Activated CD8-positive, alpha-beta T cell treated with anti-CD3 and anti-CD28 coated beads for 36 hours (primary cell): ENCODE measurements at regions of chr14 and their contacts with region 1.

Region 1: GRCh38 chr14:90697577-90698206 is 118.5 kb downstream of the TTC7B start:
- DNase-seq: peak; percentile 83
- ATAC-seq: peak; percentile 96
- H3K4me3 Mint-ChIP-seq: no peak overlapping the region
- H3K27ac Mint-ChIP-seq: no peak overlapping the region
- H3K4me1 Mint-ChIP-seq: no peaks in the 10 kb centered on the region
- H3K27me3 Mint-ChIP-seq: no peaks in the 10 kb centered on the region
- CTCF ChIP-seq: peak; percentile 96

Region 2: GRCh38 chr14:90301668-90302090 is 396.0 kb before region 1 on chr14:
- CTCF ChIA-PET with region 1: interaction called, 15 read pairs
- POLR2A ChIA-PET with region 1: no interaction called
- intact Hi-C with region 1: no loop called
- DNase-seq: no peak
- ATAC-seq: no peak
- H3K4me3 Mint-ChIP-seq: no peak overlapping the region
- H3K27ac Mint-ChIP-seq: peak overlapping the region; percentile 5
- H3K4me1 Mint-ChIP-seq: peaks cover 8% of the 10 kb centered on the region
- H3K27me3 Mint-ChIP-seq: no peaks in the 10 kb centered on the region
- CTCF ChIP-seq: no peak

Region 3: GRCh38 chr14:90399541-90400444 is 297.9 kb before region 1 on chr14:
- CTCF ChIA-PET with region 1: interaction called, 48 read pairs
- POLR2A ChIA-PET with region 1: no interaction called
- intact Hi-C with region 1: loop called (anchors 5 kb)
- DNase-seq: peak; percentile 94
- ATAC-seq: peak; percentile 55
- H3K4me3 Mint-ChIP-seq: peak overlapping the region; percentile 94
- H3K27ac Mint-ChIP-seq: peak overlapping the region; percentile 99
- H3K4me1 Mint-ChIP-seq: peaks cover 56% of the 10 kb centered on the region
- H3K27me3 Mint-ChIP-seq: no peaks in the 10 kb centered on the region
- CTCF ChIP-seq: peak; percentile 98

Region 4: DNA sequence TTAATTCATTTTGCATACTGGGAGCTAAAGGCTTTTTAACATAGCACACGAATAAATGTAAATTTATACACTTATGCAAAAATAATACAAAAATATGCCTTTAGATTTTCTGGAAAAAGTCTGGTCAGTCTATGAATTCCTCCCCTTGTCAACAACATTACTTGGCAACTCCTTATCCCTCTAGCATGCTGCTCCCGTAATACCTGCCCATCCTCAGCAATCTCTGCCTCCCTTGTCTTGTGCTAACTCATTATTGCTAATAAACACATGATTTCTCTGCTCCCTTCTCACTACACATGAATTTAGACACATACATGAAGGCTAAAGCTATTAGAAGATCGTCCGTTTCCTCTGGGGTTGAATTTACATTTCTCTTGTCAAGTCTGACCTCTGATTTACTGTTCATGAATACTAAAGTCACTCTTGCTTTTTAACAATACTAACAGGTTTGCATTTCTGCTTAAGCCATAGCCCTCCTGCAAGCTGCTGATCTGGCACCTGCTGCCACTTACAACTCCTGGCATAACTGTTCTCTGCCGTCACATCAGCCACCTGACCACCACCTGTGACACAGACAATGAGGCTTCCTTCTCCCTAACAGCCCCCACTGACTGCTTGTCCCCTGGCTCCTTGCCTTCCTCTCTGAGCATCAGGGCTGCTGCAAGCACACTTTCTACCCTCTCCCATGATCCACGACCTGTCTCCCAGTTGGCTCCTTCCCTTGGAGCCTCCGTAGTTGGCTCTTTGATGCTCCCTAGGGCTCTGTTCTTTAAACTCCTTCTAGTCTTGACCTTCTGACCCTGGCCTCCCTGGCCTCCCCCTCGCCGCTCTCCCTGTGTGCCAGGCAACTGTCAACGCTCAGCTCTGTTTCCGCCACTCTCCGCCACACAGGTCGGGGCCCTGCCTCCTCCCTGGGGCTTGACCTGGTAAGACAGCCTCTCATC is 123.2 kb before region 1 on chr14:
- CTCF ChIA-PET with region 1: interaction called, 15 read pairs
- POLR2A ChIA-PET with region 1: no interaction called
- intact Hi-C with region 1: no loop called
- DNase-seq: no peak
- ATAC-seq: no peak
- H3K4me3 Mint-ChIP-seq: no peak overlapping the region
- H3K27ac Mint-ChIP-seq: no peak overlapping the region
- H3K4me1 Mint-ChIP-seq: no peaks in the 10 kb centered on the region
- H3K27me3 Mint-ChIP-seq: no peaks in the 10 kb centered on the region
- CTCF ChIP-seq: no peak

Region 5: DNA sequence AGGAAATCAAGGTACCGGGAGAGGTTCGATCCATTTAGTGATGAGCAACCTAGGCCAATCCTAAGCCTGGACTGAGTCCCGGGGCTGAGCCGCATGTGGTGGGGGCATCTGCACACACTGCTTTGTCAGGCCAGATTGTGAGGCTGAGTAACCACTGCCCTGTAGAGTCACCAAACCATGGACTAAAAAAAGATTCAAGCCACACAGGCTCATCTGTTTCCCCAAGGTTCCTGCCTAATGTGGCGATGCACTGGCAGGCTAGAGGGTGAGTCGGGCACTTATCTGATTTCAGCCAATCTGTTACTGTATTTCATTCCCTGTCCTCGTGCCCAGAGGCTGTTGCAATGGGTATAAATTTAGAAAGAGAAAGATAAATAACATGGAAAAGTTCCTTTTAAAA is 22.3 kb before region 1 on chr14:
- CTCF ChIA-PET with region 1: interaction called, 17 read pairs
- POLR2A ChIA-PET with region 1: no interaction called
- intact Hi-C with region 1: no loop called
- DNase-seq: no peak
- ATAC-seq: no peak
- H3K4me3 Mint-ChIP-seq: no peak overlapping the region
- H3K27ac Mint-ChIP-seq: no peak overlapping the region
- H3K4me1 Mint-ChIP-seq: peaks cover 55% of the 10 kb centered on the region
- H3K27me3 Mint-ChIP-seq: no peaks in the 10 kb centered on the region
- CTCF ChIP-seq: no peak

Region 6: GRCh38 chr14:90687680-90688079 is 10.0 kb before region 1 on chr14:
- CTCF ChIA-PET with region 1: interaction called, 23 read pairs
- POLR2A ChIA-PET with region 1: no interaction called
- intact Hi-C with region 1: no loop called
- DNase-seq: no peak
- ATAC-seq: no peak
- H3K4me3 Mint-ChIP-seq: no peak overlapping the region
- H3K27ac Mint-ChIP-seq: no peak overlapping the region
- H3K4me1 Mint-ChIP-seq: no peaks in the 10 kb centered on the region
- H3K27me3 Mint-ChIP-seq: no peaks in the 10 kb centered on the region
- CTCF ChIP-seq: no peak

Region 7: DNA sequence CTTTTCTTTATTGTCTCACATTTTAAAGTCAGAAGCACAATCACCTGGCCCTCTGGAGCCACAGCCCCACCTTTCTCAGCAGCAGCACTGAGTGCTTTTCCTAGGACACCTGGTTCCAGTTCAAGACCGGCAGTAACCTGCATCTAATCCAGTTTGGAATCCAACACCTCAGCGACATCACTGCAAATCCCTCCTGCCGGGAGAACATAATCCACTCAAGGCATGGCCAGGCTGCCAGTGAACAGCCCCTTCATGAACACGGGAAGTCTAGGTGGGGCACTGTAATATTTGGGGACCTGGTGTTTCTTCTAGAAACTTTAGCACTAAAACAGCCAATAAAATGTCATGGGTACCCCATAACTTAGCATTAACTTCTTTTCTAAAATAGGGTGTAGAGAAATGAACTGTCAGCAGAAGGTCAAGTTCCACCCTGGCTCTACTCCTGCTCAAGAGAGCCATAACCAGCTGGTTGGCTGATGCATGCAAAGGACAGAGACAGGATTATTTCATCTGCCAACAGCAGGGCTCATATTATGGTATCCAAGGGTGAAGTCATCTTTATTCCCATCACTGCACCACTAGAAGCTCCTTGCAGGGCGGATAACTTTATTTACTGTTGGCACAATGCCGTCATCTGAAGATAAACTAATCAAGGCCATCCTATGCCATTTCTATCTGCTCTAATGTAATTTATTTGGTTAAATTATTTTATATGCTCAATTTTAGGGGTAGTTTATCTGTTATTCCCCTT is 41.8 kb after region 1 on chr14:
- CTCF ChIA-PET with region 1: no interaction called
- POLR2A ChIA-PET with region 1: no interaction called
- intact Hi-C with region 1: no loop called
- DNase-seq: no peak
- ATAC-seq: no peak
- H3K4me3 Mint-ChIP-seq: no peak overlapping the region
- H3K27ac Mint-ChIP-seq: no peak overlapping the region
- H3K4me1 Mint-ChIP-seq: no peaks in the 10 kb centered on the region
- H3K27me3 Mint-ChIP-seq: no peaks in the 10 kb centered on the region
- CTCF ChIP-seq: no peak

Region 8: DNA sequence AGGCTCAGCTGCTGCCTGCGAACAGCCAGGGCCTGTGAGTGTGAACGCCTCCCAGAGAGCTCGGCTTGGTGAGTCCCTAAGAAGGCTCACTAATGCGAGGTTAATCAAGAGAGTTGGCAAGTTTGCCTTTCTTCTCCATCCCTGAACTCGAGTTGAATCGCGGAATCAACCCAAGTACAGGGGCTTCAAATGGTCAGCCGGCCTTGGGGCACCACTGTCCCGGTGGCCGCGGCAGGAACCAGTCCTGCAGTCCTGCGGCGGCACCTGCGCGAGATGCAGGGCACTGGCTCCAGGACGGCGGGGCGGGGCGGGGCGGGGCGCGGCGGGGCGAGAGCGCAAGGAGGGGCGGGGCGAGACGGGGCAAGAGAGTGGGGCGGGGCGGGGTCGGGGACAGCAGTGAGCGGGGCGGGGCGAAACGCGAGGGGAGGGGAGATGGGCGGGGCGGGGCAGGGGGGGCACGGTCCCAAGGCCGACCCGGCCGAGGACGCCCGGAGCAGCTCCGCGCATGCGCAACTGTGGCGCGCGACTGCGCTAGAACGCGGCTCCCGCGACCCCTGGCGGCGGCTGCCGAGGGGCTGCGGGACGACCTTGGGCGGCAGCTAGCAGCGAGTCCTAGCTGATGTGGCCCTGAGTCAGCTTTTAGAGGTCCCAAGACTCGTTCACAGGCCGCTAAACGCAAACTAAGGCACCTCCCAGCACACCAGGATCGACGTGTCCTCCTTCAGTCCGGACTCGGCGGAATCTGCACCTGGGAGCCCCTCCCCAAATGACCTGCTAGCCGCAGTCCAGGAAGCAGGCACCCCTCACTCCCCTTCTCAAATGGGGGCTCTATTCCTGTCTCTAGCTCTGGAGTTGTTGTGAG is 60.6 kb after region 1 on chr14:
- CTCF ChIA-PET with region 1: interaction called, 36 read pairs
- POLR2A ChIA-PET with region 1: no interaction called
- intact Hi-C with region 1: no loop called
- DNase-seq: peak; percentile 92
- ATAC-seq: peak; percentile 92
- H3K4me3 Mint-ChIP-seq: peak overlapping the region; percentile 75
- H3K27ac Mint-ChIP-seq: peak overlapping the region; percentile 77
- H3K4me1 Mint-ChIP-seq: peaks cover 15% of the 10 kb centered on the region
- H3K27me3 Mint-ChIP-seq: no peaks in the 10 kb centered on the region
- CTCF ChIP-seq: peak; percentile 73

Region 9: GRCh38 chr14:90839024-90839888 is 141.6 kb after region 1 on chr14:
- CTCF ChIA-PET with region 1: no interaction called
- POLR2A ChIA-PET with region 1: no interaction called
- intact Hi-C with region 1: no loop called
- DNase-seq: no peak
- ATAC-seq: no peak
- H3K4me3 Mint-ChIP-seq: no peak overlapping the region
- H3K27ac Mint-ChIP-seq: no peak overlapping the region
- H3K4me1 Mint-ChIP-seq: peaks cover 18% of the 10 kb centered on the region
- H3K27me3 Mint-ChIP-seq: peaks cover 12% of the 10 kb centered on the region
- CTCF ChIP-seq: no peak